ENCODE measurements at regions of chr6 and their contacts with region 1.

Region 1: GRCh38 chr6:109382576-109383437 is 540 bp upstream of the CD164 start:
- DNase-seq: peak; percentile 93
- ATAC-seq: peak; percentile 74
- H3K4me3 Mint-ChIP-seq: peak overlapping the region; percentile 97
- H3K27ac Mint-ChIP-seq: peak overlapping the region; percentile 99
- H3K4me1 Mint-ChIP-seq: peaks cover 40% of the 10 kb centered on the region
- H3K27me3 Mint-ChIP-seq: no peaks in the 10 kb centered on the region
- CTCF ChIP-seq: peak; percentile 80

Region 2: GRCh38 chr6:108260809-108261569 is 1121.8 kb before region 1 on chr6 and contains the start of gene SNX3:
- CTCF ChIA-PET with region 1: no interaction called
- POLR2A ChIA-PET with region 1: no interaction called
- intact Hi-C with region 1: loop called (anchors 1 kb)
- DNase-seq: peak; percentile 98
- ATAC-seq: peak; percentile 92
- H3K4me3 Mint-ChIP-seq: peak within 1 kb of the TSS; percentile 93
- H3K27ac Mint-ChIP-seq: peak within 1 kb of the TSS; percentile 98
- H3K4me1 Mint-ChIP-seq: peaks cover 43% of the 10 kb centered on the region
- H3K27me3 Mint-ChIP-seq: no peaks in the 10 kb centered on the region
- CTCF ChIP-seq: no peak
- total RNA-seq, gene SNX3: 121 and 133 TPM in 2 replicates

Region 3: GRCh38 chr6:108782179-108783041 is 600.4 kb before region 1 on chr6:
- CTCF ChIA-PET with region 1: no interaction called
- POLR2A ChIA-PET with region 1: no interaction called
- intact Hi-C with region 1: loop called (anchors 5 kb)
- DNase-seq: peak; percentile 52
- ATAC-seq: peak; percentile 94
- H3K4me3 Mint-ChIP-seq: peak overlapping the region; percentile 81
- H3K27ac Mint-ChIP-seq: no peak overlapping the region
- H3K4me1 Mint-ChIP-seq: peaks cover 29% of the 10 kb centered on the region
- H3K27me3 Mint-ChIP-seq: peaks cover 17% of the 10 kb centered on the region
- CTCF ChIP-seq: peak; percentile 27

Region 4: GRCh38 chr6:109117346-109118035 is 265.3 kb before region 1 on chr6:
- CTCF ChIA-PET with region 1: no interaction called
- POLR2A ChIA-PET with region 1: no interaction called
- intact Hi-C with region 1: loop called (anchors 2 kb)
- DNase-seq: no peak
- ATAC-seq: peak; percentile 97
- H3K4me3 Mint-ChIP-seq: peak overlapping the region; percentile 17
- H3K27ac Mint-ChIP-seq: peak overlapping the region; percentile 57
- H3K4me1 Mint-ChIP-seq: peaks cover 45% of the 10 kb centered on the region
- H3K27me3 Mint-ChIP-seq: no peaks in the 10 kb centered on the region
- CTCF ChIP-seq: no peak

Region 5: DNA sequence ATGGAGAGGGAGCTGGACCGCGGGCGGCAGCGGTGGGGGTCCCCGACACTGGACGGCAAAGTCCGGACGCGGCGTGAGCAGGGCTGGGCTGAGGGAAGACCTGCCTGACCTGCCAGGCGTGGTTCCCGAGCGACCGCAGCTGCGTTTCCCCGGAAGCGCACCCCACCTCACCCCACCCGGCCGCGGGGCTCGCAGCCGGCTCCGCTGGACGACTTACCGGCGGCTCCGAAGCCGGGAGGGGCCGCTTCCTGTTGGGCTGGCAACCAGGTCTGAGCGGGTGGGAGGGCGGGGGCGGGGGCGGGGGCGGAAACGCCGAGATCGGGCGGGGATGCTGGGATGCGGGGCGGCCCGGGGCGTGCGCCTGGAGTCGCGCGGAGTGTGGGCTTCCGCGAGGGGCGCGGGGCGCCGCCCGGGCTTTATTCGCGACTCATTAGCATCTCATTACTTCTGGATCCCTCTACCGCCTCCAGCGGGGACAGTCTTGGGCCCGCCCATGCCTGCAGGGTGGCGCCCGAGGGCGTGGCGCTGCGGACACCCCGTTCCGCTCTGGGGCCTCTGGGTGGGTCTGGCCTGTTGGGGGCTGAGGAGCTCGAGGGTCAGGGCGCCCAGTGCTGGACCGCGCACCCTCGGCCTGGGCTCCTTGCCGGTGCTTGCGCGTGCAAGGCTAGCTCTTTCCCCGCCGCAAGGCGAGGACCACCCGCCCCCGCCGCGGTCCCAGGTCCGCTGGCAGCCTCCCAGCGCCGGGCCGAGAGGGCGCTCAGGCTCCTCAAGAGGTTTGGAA is 72.9 kb after region 1 on chr6 and contains the start of gene MICAL1:
- CTCF ChIA-PET with region 1: interaction called, 10 read pairs
- POLR2A ChIA-PET with region 1: interaction called, 104 read pairs
- intact Hi-C with region 1: loop called (anchors 1 kb)
- DNase-seq: peak; percentile 82
- ATAC-seq: peak; percentile 58
- H3K4me3 Mint-ChIP-seq: peak within 1 kb of the TSS; percentile 97
- H3K27ac Mint-ChIP-seq: peak within 1 kb of the TSS; percentile 98
- H3K4me1 Mint-ChIP-seq: peaks cover 80% of the 10 kb centered on the region
- H3K27me3 Mint-ChIP-seq: no peaks in the 10 kb centered on the region
- CTCF ChIP-seq: no peak
- total RNA-seq, gene MICAL1: 104 and 120 TPM in 2 replicates

Region 6: GRCh38 chr6:110179401-110180227 is 796.8 kb after region 1 on chr6 and contains the start of gene WASF1:
- CTCF ChIA-PET with region 1: no interaction called
- POLR2A ChIA-PET with region 1: interaction called, 7 read pairs
- intact Hi-C with region 1: loop called (anchors 1 kb)
- DNase-seq: peak; percentile 92
- ATAC-seq: peak; percentile 80
- H3K4me3 Mint-ChIP-seq: no peak within 1 kb of the TSS
- H3K27ac Mint-ChIP-seq: peak within 1 kb of the TSS; percentile 86
- H3K4me1 Mint-ChIP-seq: peaks cover 7% of the 10 kb centered on the region
- H3K27me3 Mint-ChIP-seq: no peaks in the 10 kb centered on the region
- CTCF ChIP-seq: no peak
- total RNA-seq, gene WASF1: 5.1 and 6.2 TPM in 2 replicates